Adrenal gland (tissue), 19 donors: ENCODE measurements at regions of chr9 and their contacts with region 1.

Region 1: GRCh38 chr9:107644733-107645463 is 155.3 kb upstream of the KLF4 start:
- DNase-seq: peak; percentile 31 to 76 (median 58)
- H3K4me3 ChIP-seq: no peak overlapping the region
- H3K27ac ChIP-seq: peak overlapping the region in 2 of 5 donors; percentile 14 to 52
- H3K4me1 ChIP-seq: peaks cover 0 to 9% of the 10 kb centered on the region in 2 donors
- H3K27me3 ChIP-seq: no peaks in the 10 kb centered on the region
- CTCF ChIP-seq: no peak
- POLR2A ChIP-seq: no peak

Region 2: GRCh38 chr9:107489687-107490605 is 155.0 kb before region 1 on chr9 and contains the start of gene KLF4:
- intact Hi-C with region 1: no loop called
- DNase-seq: peak; percentile 92 to 96 (median 94)
- H3K4me3 ChIP-seq: peak within 1 kb of the TSS in 3 of 4 donors; percentile 26 to 84 (median 46)
- H3K27ac ChIP-seq: peak within 1 kb of the TSS; percentile 61 to 97 (median 86)
- H3K4me1 ChIP-seq: peaks cover 9 to 34% of the 10 kb centered on the region in 2 donors
- H3K27me3 ChIP-seq: no peaks in the 10 kb centered on the region
- CTCF ChIP-seq: peak in 1 of 6 experiments; percentile 15
- POLR2A ChIP-seq: peak; percentile 69 to 91
- total RNA-seq, gene KLF4: 3.3 to 58.3 (median 16.4) TPM

Region 3: DNA sequence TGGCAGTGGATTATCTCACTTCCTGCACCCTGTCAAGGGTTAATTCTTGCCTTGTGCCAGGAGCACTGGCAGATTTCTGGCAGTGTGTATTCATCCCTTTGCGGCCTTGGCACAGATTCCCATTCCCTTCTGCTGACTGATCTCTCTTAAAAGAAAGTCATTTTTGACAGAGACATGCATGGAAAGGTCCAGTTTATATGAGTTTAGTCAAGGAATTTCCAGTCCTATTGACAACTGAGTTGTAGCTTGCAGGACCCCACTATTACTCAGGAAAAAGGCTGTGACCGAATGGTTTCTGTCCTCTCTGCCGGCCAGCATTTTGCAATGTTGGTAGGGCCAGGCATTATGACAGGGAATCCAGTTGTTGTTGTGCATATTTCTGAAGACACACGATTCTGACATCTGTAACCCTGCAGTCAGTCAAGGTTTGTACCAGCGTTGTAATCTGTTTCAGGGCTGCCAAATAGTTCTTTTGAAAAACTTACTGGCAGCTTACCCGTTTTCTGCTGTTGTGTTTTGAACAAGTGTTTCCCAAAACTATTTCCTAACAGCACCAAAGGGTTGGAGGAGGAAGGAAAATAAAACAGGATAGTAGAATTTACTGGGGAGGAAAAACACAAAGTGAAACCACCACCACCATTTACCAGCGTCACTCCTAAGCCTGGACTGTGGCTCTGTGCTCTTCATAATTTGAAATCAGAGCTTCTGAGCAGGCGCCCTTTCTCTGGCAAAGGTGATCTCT is 88.1 kb after region 1 on chr9:
- intact Hi-C with region 1: loop called in 1 of 2 experiments (anchors 10 kb)
- DNase-seq: peak; percentile 60 to 91 (median 81)
- H3K4me3 ChIP-seq: peak overlapping the region in 1 of 4 donors; percentile 38
- H3K27ac ChIP-seq: peak overlapping the region; percentile 64 to 96 (median 89)
- H3K4me1 ChIP-seq: peaks cover 35 to 37% of the 10 kb centered on the region in 2 donors
- H3K27me3 ChIP-seq: no peaks in the 10 kb centered on the region
- CTCF ChIP-seq: no peak
- POLR2A ChIP-seq: peak in 1 of 2 donors; percentile 28